ENCODE measurements at regions of chr7 and their contacts with region 1.

Region 1: DNA sequence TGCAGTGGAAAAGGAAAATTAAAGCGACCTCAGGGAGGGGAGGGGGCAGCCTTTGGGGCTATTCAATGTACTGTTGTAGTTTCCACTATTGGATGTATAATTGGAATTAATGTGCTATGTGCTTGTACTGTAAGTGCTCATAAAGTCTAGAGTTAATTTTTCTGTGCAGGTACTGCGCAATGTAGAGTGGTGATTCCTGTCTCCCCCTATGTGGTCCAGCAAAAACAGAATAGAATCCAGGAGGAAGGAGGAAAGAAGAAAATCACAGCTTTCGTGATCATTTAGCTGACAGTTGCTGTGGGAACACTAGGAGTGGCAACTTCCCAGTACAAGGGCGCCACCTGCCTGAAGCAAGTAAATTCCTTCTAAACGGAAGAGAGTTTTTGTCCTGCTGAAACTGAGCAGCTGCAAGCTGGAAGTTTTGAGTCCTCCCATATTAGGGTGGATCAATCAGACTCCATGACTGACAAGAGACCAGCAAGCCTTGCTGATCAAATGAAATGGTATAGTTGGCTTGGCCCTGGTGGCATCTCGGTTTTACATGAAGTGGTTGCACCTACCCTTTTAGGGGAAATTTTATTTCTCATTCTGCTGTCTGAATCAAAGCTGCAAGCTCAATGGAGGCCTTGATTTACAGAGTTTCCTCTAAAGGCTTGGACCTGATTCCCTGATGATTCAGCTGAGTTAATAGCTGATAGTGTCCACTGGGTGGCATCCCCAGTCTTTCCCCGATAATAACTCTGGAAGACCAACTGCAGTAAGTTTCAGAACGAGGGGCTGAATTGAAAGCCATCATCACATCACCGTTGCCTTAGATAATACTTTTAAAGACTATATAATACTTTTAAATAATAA is 299.8 kb downstream of the HGF start:
- H3K4me3 Mint-ChIP-seq: no peak overlapping the region
- H3K27ac Mint-ChIP-seq: no peak overlapping the region
- H3K4me1 Mint-ChIP-seq: no peaks in the 10 kb centered on the region
- H3K27me3 Mint-ChIP-seq: peaks cover 1% of the 10 kb centered on the region

Region 2: DNA sequence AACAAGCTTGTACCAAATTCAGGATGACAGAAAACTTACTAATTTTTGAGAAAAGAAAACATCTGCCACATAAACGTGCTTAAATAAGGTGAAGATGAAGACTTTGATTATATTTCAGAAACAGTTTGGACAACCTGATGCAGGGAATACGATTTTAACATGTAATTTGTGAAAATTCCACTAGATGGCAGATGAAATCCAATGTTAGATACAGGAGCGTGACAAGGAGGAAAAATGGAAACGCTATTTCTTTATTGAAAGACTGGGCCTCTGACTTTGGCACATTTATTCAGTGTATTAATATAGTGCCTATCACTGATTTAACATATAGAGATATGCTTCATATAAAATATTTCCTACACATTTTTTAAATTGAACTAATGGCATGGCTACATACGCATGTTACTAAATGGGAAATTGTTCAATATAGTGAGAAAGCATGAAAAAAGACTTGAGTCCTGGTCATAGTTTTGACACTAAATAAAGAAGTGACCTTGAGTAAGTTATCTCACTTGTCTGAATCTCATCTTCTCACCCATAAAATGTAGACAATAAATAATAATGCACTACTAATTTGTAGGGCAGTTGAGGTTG is 771.0 kb before region 1 on chr7:
- intact Hi-C with region 1: loop called (anchors 1 kb)
- H3K4me3 Mint-ChIP-seq: no peak overlapping the region
- H3K27ac Mint-ChIP-seq: no peak overlapping the region
- H3K4me1 Mint-ChIP-seq: peaks cover 13% of the 10 kb centered on the region
- H3K27me3 Mint-ChIP-seq: no peaks in the 10 kb centered on the region

Region 3: GRCh38 chr7:81140775-81141174 is 329.3 kb before region 1 on chr7:
- intact Hi-C with region 1: loop called (anchors 10 kb)
- H3K4me3 Mint-ChIP-seq: peak overlapping the region; percentile 20
- H3K27ac Mint-ChIP-seq: peak overlapping the region; percentile 84
- H3K4me1 Mint-ChIP-seq: peaks cover 26% of the 10 kb centered on the region
- H3K27me3 Mint-ChIP-seq: no peaks in the 10 kb centered on the region

Measured in dendritic cell treated with granulocyte-macrophage colony-stimulating factor and Interleukin-4, amounts not matched to agents 40 ng/mL and 50 ng/mL, for 4 days (primary cell).